AG04449 (cell line): ENCODE measurements at regions of chr5 and their contacts with region 1.

Region 1: DNA sequence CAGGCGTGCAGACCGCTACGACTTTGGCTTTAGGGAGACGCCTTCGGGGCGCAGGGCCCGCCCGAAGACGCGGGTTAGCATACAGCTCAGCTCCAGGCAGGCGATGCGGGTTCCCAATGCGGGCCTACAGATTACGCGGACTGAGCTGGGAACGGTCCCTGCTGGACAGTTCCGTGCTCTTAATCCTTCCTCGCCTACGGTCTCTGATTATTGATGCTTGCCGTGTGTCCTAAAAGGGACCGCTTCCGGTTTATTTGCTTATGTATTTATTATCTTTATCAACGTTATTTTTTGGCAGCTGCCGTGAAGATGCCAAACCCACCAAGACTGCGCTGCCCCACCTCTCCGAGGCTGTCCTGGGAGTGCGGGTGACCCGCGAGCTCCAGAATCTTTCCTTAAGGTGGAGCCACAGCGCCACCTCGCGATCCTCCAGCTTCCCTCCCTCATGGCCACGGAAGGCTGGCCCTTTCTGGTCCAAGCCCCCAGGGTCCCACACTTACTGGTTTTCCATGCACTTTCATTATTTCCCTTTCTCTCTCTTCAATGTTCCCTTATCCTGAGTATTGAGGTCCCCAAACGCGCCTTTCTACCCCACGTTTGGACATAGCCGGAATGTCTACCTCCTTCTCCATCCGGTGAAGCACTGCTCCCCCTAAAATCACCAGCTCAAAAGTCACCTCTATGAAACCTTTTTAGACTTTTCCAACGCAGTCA is 7.0 kb upstream of the EBF1 start:
- DNase-seq: no peak
- H3K4me3 ChIP-seq: peak overlapping the region; percentile 43
- CTCF ChIP-seq: peak; percentile 90

Region 2: DNA sequence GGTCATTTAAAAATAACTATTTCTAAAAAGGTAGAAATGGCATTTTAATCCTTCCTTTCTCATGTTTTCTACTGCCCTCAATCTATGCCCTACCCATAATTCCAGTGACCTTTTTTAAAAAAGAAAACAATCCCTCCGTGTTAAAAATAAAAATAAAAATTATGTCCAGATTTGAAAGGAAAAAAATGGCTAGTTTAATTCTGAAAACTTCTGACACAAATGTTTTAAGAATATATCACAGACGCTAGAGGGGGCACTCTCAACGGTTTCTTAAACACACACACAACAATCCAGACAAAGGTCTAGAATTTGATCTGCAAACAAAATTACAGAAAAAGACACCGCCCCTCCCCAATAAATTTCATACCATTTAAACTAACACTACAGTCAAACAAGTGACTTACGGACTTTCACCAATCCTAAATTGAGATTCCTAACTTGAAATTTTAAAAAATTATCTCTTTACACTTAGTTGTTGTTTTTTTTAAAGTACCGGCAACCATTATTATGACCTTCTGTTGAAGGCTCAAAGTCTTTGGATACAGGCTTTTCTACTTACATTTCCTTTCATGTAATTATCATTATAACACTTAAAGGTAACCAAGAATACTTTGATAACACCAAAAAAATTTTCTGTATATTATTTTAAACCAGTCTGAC is 1286.0 kb before region 1 on chr5:
- CTCF ChIA-PET with region 1: interaction called, 10 read pairs
- POLR2A ChIA-PET with region 1: no interaction called
- DNase-seq: no peak
- H3K4me3 ChIP-seq: no peak overlapping the region
- CTCF ChIP-seq: peak; percentile 8

Region 3: DNA sequence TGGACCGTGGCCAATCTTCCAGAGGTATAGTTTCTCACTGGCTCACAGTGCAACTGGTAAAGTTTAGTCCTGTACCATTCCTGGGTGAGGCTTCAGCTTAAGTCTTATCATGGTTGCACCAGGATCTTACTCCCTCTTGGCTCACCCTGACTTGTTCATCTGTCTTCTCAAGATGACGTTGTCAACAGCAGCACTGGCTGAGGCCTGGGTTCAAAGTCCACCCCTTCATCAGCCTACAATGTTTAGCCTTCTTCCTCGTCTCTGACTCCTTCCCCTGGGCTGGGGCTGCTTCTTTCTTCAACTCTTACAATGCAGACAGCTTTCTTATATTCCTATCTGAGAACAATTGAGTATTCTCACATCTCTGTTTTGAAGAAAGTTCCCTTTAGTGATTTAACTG is 936.7 kb before region 1 on chr5:
- CTCF ChIA-PET with region 1: interaction called, 74 read pairs
- POLR2A ChIA-PET with region 1: no interaction called
- DNase-seq: no peak
- H3K4me3 ChIP-seq: no peak overlapping the region
- CTCF ChIP-seq: no peak

Region 4: DNA sequence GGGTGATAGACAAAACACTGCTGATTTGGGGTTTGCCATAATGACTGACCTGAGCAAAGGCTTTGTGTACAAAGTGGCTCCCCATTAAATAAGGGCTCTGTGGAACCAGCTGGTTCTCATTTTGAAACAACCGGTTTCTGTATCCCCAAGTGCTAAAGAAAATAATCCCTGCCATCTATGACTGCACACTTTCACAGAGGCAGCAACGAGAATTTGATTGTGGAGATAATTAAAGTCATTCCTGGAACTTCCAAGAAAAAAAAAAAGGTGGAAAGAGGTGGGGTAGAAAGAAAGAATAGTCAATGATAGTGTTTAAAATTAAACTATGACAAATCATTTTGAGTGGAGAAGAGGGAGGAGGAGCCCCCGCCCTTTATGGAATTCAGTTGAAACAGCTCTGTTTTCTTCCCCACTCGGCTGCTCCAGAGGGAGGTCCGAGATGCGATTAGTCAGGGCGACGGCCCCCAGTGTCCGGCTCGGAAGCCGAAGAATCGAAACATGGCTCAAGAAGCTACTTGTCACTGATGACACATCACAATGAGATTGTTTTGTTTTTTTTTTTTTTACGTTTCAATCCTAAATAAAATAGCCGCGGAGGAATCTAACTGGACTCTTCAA is 45.4 kb before region 1 on chr5:
- CTCF ChIA-PET with region 1: interaction called, 10 read pairs
- POLR2A ChIA-PET with region 1: no interaction called
- DNase-seq: no peak
- H3K4me3 ChIP-seq: peak overlapping the region; percentile 1
- CTCF ChIP-seq: no peak